Heart left ventricle (tissue), 16 donors: ENCODE measurements at regions of chr6 and their contacts with region 1.

Region 1: GRCh38 chr6:40894962-40895799 is 143.8 kb downstream of the UNC5CL start:
- DNase-seq: peak; percentile 47 to 73 (median 65)
- ATAC-seq: peak; percentile 45 to 88 (median 82)
- H3K4me3 ChIP-seq: no peak overlapping the region
- H3K27ac ChIP-seq: peak overlapping the region in 7 of 12 donors; percentile 32 to 75 (median 55)
- H3K4me1 ChIP-seq: peaks cover 0 to 39% (median 16%) of the 10 kb centered on the region in 12 donors
- H3K27me3 ChIP-seq: no peaks in the 10 kb centered on the region
- CTCF ChIP-seq: peak; percentile 22 to 71 (median 56)
- POLR2A ChIP-seq: no peak

Region 2: GRCh38 chr6:40912158-40912946 is 17.2 kb after region 1 on chr6:
- intact Hi-C with region 1: loop called in 2 of 10 experiments (anchors 1 to 2 kb)
- DNase-seq: peak in 4 of 5 donors; percentile 41 to 61 (median 52)
- ATAC-seq: peak; percentile 82 to 95 (median 92)
- H3K4me3 ChIP-seq: no peak overlapping the region
- H3K27ac ChIP-seq: peak overlapping the region in 1 of 12 donors; percentile 26
- H3K4me1 ChIP-seq: peaks cover 0 to 13% (median 5%) of the 10 kb centered on the region in 12 donors
- H3K27me3 ChIP-seq: no peaks in the 10 kb centered on the region
- CTCF ChIP-seq: peak; percentile 36 to 61 (median 53)
- POLR2A ChIP-seq: no peak

Region 3: GRCh38 chr6:40999569-40999968 is 104.4 kb after region 1 on chr6:
- intact Hi-C with region 1: loop called in 2 of 10 experiments (anchors 5 kb)
- DNase-seq: peak in 4 of 5 donors; percentile 67 to 79 (median 69)
- ATAC-seq: peak; percentile 61 to 76 (median 68)
- H3K4me3 ChIP-seq: no peak overlapping the region
- H3K27ac ChIP-seq: peak overlapping the region in 4 of 12 donors; percentile 6 to 82 (median 52)
- H3K4me1 ChIP-seq: peaks cover 0 to 32% (median 4%) of the 10 kb centered on the region in 12 donors
- H3K27me3 ChIP-seq: no peaks in the 10 kb centered on the region
- CTCF ChIP-seq: peak in 11 of 12 donors; percentile 9 to 67 (median 41)
- POLR2A ChIP-seq: no peak

Region 4: DNA sequence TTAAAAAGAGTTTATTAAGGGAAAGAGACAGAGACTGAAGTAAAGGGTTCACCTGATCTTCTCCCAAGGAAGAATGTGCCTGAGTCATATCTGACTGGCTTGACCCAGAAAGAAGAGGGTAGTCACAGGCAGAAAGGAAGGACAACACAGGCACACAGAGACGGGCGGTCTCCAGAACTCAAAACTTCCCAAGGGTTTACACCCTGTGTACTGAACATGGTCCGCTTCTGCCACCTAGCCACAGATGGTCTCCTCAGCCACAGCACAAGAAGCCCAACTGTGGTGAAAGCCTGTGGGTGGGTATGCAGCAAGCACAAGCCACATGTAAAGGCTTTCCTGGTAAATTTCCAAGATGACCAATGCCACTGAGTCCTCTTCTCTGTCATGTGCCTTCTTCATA is 126.7 kb after region 1 on chr6:
- intact Hi-C with region 1: loop called (anchors 2 to 10 kb)
- DNase-seq: peak in 2 of 5 donors; percentile 37 to 60
- ATAC-seq: peak; percentile 71 to 91 (median 78)
- H3K4me3 ChIP-seq: no peak overlapping the region
- H3K27ac ChIP-seq: no peak overlapping the region
- H3K4me1 ChIP-seq: peaks cover 0 to 12% (median 1%) of the 10 kb centered on the region in 12 donors
- H3K27me3 ChIP-seq: no peaks in the 10 kb centered on the region
- CTCF ChIP-seq: peak in 9 of 12 donors; percentile 16 to 52 (median 33)
- POLR2A ChIP-seq: no peak

Region 5: GRCh38 chr6:41066867-41067304 is 171.7 kb after region 1 on chr6:
- intact Hi-C with region 1: loop called in 3 of 10 experiments (anchors 5 kb)
- DNase-seq: peak in 4 of 5 donors; percentile 61 to 76 (median 73)
- ATAC-seq: no peak
- H3K4me3 ChIP-seq: no peak overlapping the region
- H3K27ac ChIP-seq: peak overlapping the region in 2 of 12 donors; percentile 3 to 7
- H3K4me1 ChIP-seq: peaks cover 0 to 38% (median 11%) of the 10 kb centered on the region in 12 donors
- H3K27me3 ChIP-seq: no peaks in the 10 kb centered on the region
- CTCF ChIP-seq: peak; percentile 74 to 90 (median 86)
- POLR2A ChIP-seq: no peak